ENCODE measurements at regions of chr18 and their contacts with region 1.

Region 1: GRCh38 chr18:71809711-71810110 is 734.4 kb downstream of the CBLN2 start:
- DNase-seq: no peak
- H3K4me3 ChIP-seq: no peak overlapping the region
- H3K27ac ChIP-seq: no peak overlapping the region
- H3K4me1 ChIP-seq: no peaks in the 10 kb centered on the region
- H3K27me3 ChIP-seq: no peaks in the 10 kb centered on the region
- CTCF ChIP-seq: no peak
- POLR2A ChIP-seq: no peak

Region 2: GRCh38 chr18:71754246-71754645 is 55.5 kb before region 1 on chr18:
- intact Hi-C with region 1: loop called (anchors 10 kb)
- DNase-seq: no peak
- H3K4me3 ChIP-seq: no peak overlapping the region
- H3K27ac ChIP-seq: no peak overlapping the region
- H3K4me1 ChIP-seq: no peaks in the 10 kb centered on the region
- H3K27me3 ChIP-seq: no peaks in the 10 kb centered on the region
- CTCF ChIP-seq: no peak
- POLR2A ChIP-seq: no peak

Region 3: DNA sequence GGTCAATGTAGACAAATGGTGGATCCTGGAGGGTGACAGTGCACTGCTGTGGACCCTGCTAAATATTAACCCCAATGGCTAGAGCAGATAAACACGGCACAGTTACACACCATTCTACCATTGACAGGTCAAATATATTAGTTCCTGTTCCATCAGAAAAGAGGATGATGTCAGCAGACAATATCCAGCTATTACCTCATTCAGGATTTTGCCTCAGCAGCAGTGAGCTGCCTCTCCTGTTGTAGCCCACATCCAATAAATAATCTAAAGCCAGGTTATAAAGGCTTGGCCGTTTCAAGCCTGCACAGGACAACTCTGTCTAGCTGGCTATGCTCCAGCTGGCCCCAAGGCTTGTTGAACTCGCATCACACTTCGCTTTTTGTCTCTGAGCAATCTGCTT is 1089.6 kb after region 1 on chr18:
- intact Hi-C with region 1: no loop called
- DNase-seq: no peak
- H3K4me3 ChIP-seq: no peak overlapping the region
- H3K27ac ChIP-seq: no peak overlapping the region
- H3K4me1 ChIP-seq: no peaks in the 10 kb centered on the region
- H3K27me3 ChIP-seq: no peaks in the 10 kb centered on the region
- CTCF ChIP-seq: no peak
- POLR2A ChIP-seq: no peak

Measured in vagina (tissue), 2 donors.